Heart right ventricle (tissue), 16 donors: ENCODE measurements at regions of chr2 and their contacts with region 1.

Region 1: GRCh38 chr2:212548450-212548819 is 9.8 kb upstream of the ERBB4 start:
- DNase-seq: peak in 1 of 2 donors; percentile 23
- ATAC-seq: peak; percentile 61 to 89 (median 77)
- H3K4me3 ChIP-seq: no peak overlapping the region
- H3K27ac ChIP-seq: no peak overlapping the region
- H3K4me1 ChIP-seq: peaks cover 0 to 7% (median 0%) of the 10 kb centered on the region in 9 donors
- H3K27me3 ChIP-seq: no peaks in the 10 kb centered on the region
- CTCF ChIP-seq: peak; percentile 18 to 64 (median 50)

Region 2: DNA sequence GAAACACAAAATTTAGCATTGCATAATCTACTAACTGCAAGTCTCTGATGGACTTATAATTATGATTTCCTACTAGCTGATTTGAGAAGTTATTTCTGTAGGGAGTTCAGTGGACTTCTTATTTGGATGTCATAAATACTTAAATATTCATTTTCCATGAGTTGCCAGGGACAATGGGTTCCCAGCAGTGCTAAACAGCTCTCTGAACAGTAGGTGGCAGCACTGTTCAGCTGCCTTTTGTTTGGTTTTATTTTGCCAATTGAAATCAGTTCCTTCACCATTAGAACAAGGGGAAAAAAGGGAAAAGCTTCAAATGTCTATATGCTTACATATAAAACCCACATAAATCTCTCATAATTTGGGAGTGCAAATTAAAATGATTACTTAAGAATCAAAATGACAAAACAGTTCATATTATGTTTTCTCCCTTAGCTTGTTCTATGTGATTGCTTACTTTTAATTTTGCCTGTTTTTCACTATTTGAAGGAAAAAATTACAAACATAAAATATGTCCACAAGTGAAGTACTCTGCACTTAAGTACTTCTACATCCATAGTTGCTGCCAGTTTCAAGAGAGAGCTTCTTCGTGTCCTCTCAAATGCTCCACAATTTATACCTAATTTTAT is 1093.1 kb before region 1 on chr2:
- intact Hi-C with region 1: loop called in 1 of 10 experiments (anchors 10 kb)
- DNase-seq: peak in 1 of 2 donors; percentile 5
- ATAC-seq: peak in 3 of 8 donors; percentile 17 to 49 (median 39)
- H3K4me3 ChIP-seq: no peak overlapping the region
- H3K27ac ChIP-seq: no peak overlapping the region
- H3K4me1 ChIP-seq: no peaks in the 10 kb centered on the region
- H3K27me3 ChIP-seq: no peaks in the 10 kb centered on the region
- CTCF ChIP-seq: peak; percentile 60 to 94 (median 84)

Region 3: DNA sequence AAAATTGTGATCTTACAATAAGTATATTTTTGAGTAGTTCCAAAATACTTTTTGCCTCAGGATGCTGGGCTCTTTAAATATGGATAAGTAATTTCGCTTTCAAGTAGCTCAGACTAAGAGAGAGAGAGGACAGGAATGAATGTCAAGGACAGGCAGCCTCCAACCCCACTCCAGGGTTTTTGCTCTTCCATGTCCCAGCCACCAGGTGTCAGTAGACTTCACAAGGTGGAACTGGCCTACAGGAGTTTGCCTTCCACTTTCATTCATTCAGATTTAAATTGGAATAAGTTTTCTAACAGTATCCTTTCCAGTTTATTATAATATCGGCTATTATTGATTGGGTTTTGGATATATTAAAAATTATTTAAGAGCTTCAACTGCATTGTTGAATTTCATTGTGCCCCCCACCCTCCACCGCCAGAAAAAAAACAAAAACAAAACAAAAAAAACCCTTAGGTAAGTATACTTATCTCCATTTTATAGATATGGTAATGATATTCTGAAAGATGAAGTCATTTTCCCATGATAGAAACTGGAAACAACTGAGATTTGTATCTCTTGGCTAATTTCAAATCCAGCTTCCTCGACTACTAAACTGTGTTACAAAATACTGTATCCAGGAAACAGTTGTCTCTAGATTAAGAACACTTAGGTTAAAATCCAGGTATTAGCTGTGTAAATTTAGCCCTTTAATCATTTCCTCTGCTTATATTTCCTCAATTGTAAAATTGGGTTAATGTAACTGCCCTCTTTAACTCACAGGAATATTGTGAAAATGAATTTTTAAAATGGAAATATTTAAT is 802.9 kb before region 1 on chr2:
- intact Hi-C with region 1: loop called in 3 of 10 experiments (anchors 5 kb)
- DNase-seq: peak in 1 of 2 donors; percentile 32
- ATAC-seq: peak; percentile 72 to 88 (median 82)
- H3K4me3 ChIP-seq: no peak overlapping the region
- H3K27ac ChIP-seq: no peak overlapping the region
- H3K4me1 ChIP-seq: peaks cover 0 to 7% (median 0%) of the 10 kb centered on the region in 9 donors
- H3K27me3 ChIP-seq: no peaks in the 10 kb centered on the region
- CTCF ChIP-seq: peak; percentile 50 to 86 (median 84)

Region 4: GRCh38 chr2:211996857-211997256 is 551.6 kb before region 1 on chr2:
- intact Hi-C with region 1: loop called in 1 of 10 experiments (anchors 10 kb)
- DNase-seq: no peak
- ATAC-seq: no peak
- H3K4me3 ChIP-seq: no peak overlapping the region
- H3K27ac ChIP-seq: no peak overlapping the region
- H3K4me1 ChIP-seq: no peaks in the 10 kb centered on the region
- H3K27me3 ChIP-seq: no peaks in the 10 kb centered on the region
- CTCF ChIP-seq: no peak

Region 5: DNA sequence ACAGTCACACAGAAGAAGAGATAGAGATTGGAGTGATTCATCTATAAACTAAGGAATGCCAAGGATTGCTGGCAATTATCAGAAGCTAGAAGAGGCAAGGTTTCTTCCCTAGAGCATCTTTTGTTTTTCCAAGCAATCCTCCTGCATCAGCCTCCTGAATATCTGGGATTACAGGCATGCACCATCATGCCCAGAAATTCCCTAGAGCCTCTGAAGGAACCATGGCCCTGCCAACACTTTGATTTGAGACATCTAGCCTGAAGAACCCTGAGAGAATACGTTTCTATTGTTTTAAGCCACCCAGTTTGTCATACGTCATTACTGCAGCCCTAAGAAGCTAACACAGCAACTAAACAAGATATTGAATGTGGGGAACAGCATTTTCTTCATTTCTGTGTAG is 534.8 kb before region 1 on chr2:
- intact Hi-C with region 1: loop called in 1 of 10 experiments (anchors 10 kb)
- DNase-seq: no peak
- ATAC-seq: no peak
- H3K4me3 ChIP-seq: no peak overlapping the region
- H3K27ac ChIP-seq: no peak overlapping the region
- H3K4me1 ChIP-seq: peaks cover 0 to 3% (median 0%) of the 10 kb centered on the region in 9 donors
- H3K27me3 ChIP-seq: no peaks in the 10 kb centered on the region
- CTCF ChIP-seq: no peak

Region 6: GRCh38 chr2:212147921-212148513 is 400.4 kb before region 1 on chr2:
- intact Hi-C with region 1: loop called in 1 of 10 experiments (anchors 10 kb)
- DNase-seq: no peak
- ATAC-seq: no peak
- H3K4me3 ChIP-seq: no peak overlapping the region
- H3K27ac ChIP-seq: no peak overlapping the region
- H3K4me1 ChIP-seq: no peaks in the 10 kb centered on the region
- H3K27me3 ChIP-seq: no peaks in the 10 kb centered on the region
- CTCF ChIP-seq: peak in 8 of 9 donors; percentile 16 to 60 (median 42)

Region 7: GRCh38 chr2:212392043-212392442 is 156.4 kb before region 1 on chr2:
- intact Hi-C with region 1: no loop called
- DNase-seq: no peak
- ATAC-seq: no peak
- H3K4me3 ChIP-seq: no peak overlapping the region
- H3K27ac ChIP-seq: no peak overlapping the region
- H3K4me1 ChIP-seq: no peaks in the 10 kb centered on the region
- H3K27me3 ChIP-seq: no peaks in the 10 kb centered on the region
- CTCF ChIP-seq: no peak